Common myeloid progenitor, CD34-positive (primary cell): ENCODE measurements at regions of chr12 and their contacts with region 1.

Region 1: DNA sequence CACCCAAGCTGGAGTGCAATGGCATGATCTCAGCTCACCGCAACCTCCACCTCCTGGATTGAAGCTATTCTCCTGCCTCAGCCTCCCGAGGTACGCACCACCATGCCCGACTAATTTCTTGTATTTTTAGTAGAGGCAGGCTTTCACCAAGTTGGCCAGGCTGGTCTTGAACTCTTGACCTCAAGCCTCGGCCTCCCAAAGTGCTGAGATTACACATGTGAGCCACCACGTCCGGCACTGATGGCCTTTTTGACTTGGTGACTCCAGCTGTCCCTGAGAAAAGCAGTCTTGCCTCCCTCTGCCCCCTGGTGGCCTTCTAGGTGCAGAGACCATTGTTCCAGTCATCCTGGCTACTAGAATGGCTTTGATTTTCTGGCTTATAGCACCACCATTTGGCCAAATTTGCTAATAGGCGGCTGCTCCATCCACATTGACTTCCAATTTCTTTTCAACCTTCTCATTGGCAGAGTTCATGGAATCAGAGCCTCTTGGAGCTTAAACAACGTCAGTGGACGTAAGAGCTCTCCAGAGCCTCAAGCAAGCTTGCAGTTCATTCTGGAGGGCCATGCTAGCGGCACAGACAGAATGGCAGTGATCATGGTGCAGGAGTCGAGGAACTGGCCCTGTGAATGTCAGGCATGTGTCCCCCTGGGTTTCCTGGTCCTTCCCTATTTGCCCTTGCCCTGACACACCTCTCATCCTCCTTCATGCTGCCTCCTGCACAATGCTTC is 25.4 kb upstream of the EIF4B start:
- DNase-seq: peak; percentile 89 to 95 (median 90)
- H3K4me3 ChIP-seq: no peak overlapping the region
- H3K27ac ChIP-seq: no peak overlapping the region
- H3K4me1 ChIP-seq: no peaks in the 10 kb centered on the region
- H3K27me3 ChIP-seq: peaks cover 0 to 2% (median 0%) of the 10 kb centered on the region in 5 experiments

Region 2: GRCh38 chr12:52895061-52895887 is 85.6 kb before region 1 on chr12:
- CTCF ChIA-PET with region 1: interaction called, 450 read pairs
- POLR2A ChIA-PET with region 1: no interaction called
- DNase-seq: no peak
- H3K4me3 ChIP-seq: no peak overlapping the region
- H3K27ac ChIP-seq: no peak overlapping the region
- H3K4me1 ChIP-seq: no peaks in the 10 kb centered on the region
- H3K27me3 ChIP-seq: no peaks in the 10 kb centered on the region

Region 3: DNA sequence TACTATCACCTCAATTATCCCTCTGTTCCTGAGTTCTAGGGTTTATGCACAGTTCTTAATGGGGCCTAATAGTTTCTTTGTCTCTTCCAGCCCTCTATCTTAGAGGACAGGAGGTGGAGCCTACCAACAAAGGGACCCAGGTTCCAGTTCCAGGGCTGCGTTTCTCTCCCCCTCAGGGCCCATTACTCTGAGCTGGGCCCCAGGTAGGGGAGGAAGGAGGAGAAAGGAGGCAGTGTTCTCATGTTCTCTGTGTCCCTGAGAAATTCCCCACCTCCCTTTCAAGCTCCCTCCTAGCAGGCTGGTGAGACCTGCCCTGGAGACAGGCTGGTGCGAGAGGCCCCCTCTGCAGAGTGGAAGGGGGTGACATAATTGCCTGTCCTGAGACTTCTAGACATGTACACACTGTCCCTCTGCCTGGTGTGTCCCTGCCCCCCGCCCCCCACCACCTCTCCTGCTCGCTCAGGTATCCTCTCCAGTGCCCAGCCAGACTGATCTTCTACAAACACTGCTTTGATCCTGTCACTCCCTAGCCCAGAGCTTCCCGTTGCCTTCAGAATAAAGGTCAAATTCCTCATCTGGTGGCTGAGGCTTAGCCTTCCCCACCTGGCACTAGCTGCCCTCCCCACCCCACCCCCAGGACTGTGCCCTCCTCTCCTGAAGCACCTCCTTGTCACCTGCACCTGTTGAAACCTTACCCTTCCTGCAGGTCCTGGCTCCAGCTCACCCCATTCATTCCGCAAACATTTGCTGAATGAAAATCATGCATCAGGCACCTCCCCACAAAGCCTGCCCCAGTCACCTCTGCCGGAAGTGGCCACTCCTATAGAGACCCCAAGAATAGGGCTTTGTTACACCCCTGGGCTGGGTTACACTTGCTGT is 54.9 kb before region 1 on chr12:
- CTCF ChIA-PET with region 1: interaction called, 12 read pairs
- POLR2A ChIA-PET with region 1: no interaction called
- DNase-seq: no peak
- H3K4me3 ChIP-seq: no peak overlapping the region
- H3K27ac ChIP-seq: peak overlapping the region in 1 of 2 experiments; percentile 58
- H3K4me1 ChIP-seq: no peaks in the 10 kb centered on the region
- H3K27me3 ChIP-seq: no peaks in the 10 kb centered on the region

Region 4: DNA sequence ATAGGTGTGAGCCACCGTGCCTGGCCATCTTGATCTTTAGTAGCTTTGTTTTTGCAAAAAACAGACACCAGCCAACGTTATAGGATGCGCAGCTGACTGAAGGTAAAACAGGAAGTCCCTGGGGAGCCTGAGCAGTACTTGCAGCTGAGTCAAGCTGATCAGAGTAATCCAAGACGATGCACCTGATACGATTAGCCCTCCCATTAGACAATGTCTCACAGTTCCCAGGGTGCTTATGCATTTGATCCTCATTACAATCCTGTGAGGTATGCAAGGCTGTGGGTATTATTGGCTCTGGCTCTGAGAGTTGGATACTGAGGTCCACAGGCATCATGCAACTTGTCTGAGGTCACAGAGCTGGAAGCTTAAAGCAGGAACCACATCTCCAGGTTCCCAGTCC is 23.9 kb before region 1 on chr12:
- CTCF ChIA-PET with region 1: interaction called, 14 read pairs
- POLR2A ChIA-PET with region 1: no interaction called
- DNase-seq: peak in 2 of 3 donors; percentile 46 to 57
- H3K4me3 ChIP-seq: no peak overlapping the region
- H3K27ac ChIP-seq: no peak overlapping the region
- H3K4me1 ChIP-seq: peaks cover 0 to 5% (median 0%) of the 10 kb centered on the region in 4 experiments
- H3K27me3 ChIP-seq: no peaks in the 10 kb centered on the region